ENCODE measurements at regions of chr6 and their contacts with region 1.

Region 1: GRCh38 chr6:163413345-163414116 is 987 bp upstream of the QKI start:
- DNase-seq: peak; percentile 93
- H3K4me3 ChIP-seq: peak overlapping the region; percentile 64 to 92 (median 70)
- H3K27ac ChIP-seq: peak overlapping the region; percentile 85
- H3K4me1 ChIP-seq: peaks cover 20% of the 10 kb centered on the region
- H3K27me3 ChIP-seq: no peaks in the 10 kb centered on the region
- CTCF ChIP-seq: no peak
- POLR2A ChIP-seq: peak; percentile 1

Region 2: DNA sequence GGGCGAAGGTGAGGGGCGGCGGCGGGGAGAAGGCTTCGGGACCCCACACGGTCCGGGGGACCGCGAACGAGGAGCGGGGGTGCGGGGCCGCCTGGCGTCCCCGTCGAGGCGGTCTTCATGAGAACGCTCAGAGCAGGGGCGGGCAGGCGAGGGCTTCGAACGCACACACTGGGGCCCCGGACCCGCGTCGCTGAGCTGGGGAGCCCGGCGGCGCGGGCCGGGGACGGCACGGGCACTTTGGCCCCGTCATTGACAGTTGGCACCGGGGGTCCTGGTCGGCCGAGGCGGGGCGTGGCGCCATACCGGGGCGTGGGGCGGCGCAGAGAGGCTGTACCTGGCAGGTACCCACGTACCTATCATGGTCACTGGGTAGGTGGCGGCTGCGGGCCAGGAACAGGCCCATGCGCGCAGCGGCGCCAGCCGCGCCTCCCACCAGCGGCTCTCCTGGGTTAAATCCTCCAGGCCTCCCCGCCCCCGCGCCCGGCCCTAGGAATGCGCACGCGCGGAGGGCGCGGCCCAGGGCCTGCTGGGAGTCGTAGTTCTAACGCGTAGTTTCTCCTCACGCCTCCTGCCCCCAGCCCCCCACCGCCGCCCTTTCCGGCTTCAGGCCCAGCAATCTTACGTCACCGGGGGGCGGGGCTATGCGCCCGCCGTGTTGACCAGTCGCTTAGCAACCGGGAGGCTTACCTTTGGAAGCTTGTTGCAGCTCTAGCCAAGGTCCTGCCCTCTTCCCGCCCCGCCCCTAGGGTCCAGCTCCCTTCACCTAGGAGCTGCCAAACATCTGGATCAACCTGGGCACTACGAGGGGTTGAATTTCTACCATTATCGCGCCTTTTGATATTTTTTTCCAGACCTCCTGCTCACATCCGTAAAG is 686.0 kb before region 1 on chr6 and contains the starts of genes PACRG and PRKN:
- CTCF ChIA-PET with region 1: no interaction called
- POLR2A ChIA-PET with region 1: no interaction called
- dilution Hi-C with region 1: no loop called
- intact Hi-C with region 1: loop called (anchors 10 kb)
- DNase-seq: peak; percentile 96
- H3K4me3 ChIP-seq: peak within 1 kb of the TSS; percentile 57 to 97 (median 60)
- H3K27ac ChIP-seq: peak within 1 kb of the TSS; percentile 31
- H3K4me1 ChIP-seq: peaks cover 5% of the 10 kb centered on the region
- H3K27me3 ChIP-seq: no peaks in the 10 kb centered on the region
- CTCF ChIP-seq: no peak
- POLR2A ChIP-seq: peak; percentile 30
- total RNA-seq, gene PACRG: not detected in 2 replicates
- total RNA-seq, gene PRKN: 0.60 TPM in 1 of 2 replicates, not detected in the other

Region 3: DNA sequence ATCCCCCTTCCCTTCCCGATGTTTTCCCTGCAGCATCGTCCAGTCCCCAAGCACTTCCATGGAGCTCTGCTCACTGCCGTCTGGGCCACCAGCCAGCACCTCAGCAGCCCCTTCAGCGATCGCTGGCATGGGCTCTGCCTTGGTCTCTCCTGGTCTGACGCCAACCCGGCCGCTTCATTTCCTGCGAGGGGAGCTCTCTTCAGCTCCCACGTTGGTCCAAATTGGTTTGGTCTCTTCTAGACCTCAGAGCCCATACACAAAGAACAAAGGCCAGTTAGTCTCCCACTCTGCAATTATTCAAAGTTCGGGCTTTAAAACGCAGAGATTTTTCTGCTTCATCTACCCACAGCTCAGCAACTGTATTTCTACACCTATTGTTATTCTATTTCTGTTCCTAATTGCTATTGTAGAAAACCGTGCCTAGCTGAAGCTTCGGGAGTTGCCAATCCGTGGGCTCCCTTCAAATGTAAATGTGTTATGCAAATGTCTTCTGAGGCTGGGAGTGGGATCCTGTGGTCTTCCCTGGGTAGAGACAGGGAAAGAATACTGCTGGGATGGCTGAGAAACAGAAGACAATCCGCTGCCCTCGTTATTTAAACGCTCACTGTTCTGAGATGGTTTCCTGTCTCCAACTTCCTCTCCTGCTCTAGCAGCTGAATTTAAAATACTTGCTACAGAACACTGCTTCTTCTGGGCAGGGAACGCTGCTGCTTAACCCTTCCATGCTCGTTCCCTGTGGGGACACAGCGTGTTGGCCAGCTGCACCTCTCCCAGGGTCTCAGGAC is 153.2 kb before region 1 on chr6:
- CTCF ChIA-PET with region 1: interaction called, 3 read pairs
- POLR2A ChIA-PET with region 1: no interaction called
- dilution Hi-C with region 1: no loop called
- intact Hi-C with region 1: loop called (anchors 1 kb)
- DNase-seq: peak; percentile 48
- H3K4me3 ChIP-seq: peak overlapping the region in 2 of 3 experiments; percentile 21 to 38
- H3K27ac ChIP-seq: no peak overlapping the region
- H3K4me1 ChIP-seq: peaks cover 9% of the 10 kb centered on the region
- H3K27me3 ChIP-seq: no peaks in the 10 kb centered on the region
- CTCF ChIP-seq: no peak
- POLR2A ChIP-seq: no peak

Region 4: DNA sequence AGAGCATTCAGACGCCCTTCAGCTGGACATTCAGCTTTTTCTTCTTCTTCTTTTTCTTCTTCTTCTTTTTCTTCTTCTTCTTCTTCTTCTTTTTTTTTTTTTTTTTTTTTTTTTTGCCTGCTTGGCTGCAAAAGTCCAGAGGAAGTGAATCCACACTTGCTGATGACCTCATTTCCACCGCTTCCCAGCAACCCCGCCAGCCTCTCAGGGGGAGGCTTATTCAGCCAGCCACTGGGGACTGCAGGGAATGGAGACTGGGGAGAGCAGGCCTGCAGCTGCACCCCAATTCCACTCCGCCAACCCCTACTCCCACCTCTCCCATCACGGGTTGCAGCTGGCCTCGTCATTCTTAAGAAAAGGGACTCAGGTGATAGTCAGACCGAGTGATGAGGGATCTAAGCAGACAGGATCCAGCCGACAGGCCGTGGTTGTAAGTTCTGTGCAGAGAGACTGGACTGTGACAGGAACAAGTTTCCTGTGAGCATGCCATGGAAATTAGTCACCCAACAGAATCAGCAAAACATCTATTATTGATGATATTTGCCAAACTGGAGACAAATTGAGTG is 58.0 kb before region 1 on chr6:
- CTCF ChIA-PET with region 1: interaction called, 31 read pairs
- POLR2A ChIA-PET with region 1: interaction called, 4 read pairs
- dilution Hi-C with region 1: no loop called
- intact Hi-C with region 1: loop called (anchors 1 kb)
- DNase-seq: peak; percentile 93
- H3K4me3 ChIP-seq: peak overlapping the region in 2 of 3 experiments; percentile 23 to 51
- H3K27ac ChIP-seq: peak overlapping the region; percentile 97
- H3K4me1 ChIP-seq: peaks cover 36% of the 10 kb centered on the region
- H3K27me3 ChIP-seq: no peaks in the 10 kb centered on the region
- CTCF ChIP-seq: no peak
- POLR2A ChIP-seq: peak; percentile 72

Region 5: GRCh38 chr6:163460307-163460782 is 46.8 kb after region 1 on chr6:
- CTCF ChIA-PET with region 1: interaction called, 7 read pairs
- POLR2A ChIA-PET with region 1: no interaction called
- dilution Hi-C with region 1: no loop called
- intact Hi-C with region 1: loop called (anchors 2 kb)
- DNase-seq: peak; percentile 84
- H3K4me3 ChIP-seq: peak overlapping the region; percentile 21 to 77 (median 38)
- H3K27ac ChIP-seq: peak overlapping the region; percentile 49
- H3K4me1 ChIP-seq: peaks cover 43% of the 10 kb centered on the region
- H3K27me3 ChIP-seq: no peaks in the 10 kb centered on the region
- CTCF ChIP-seq: no peak
- POLR2A ChIP-seq: no peak

Region 6: DNA sequence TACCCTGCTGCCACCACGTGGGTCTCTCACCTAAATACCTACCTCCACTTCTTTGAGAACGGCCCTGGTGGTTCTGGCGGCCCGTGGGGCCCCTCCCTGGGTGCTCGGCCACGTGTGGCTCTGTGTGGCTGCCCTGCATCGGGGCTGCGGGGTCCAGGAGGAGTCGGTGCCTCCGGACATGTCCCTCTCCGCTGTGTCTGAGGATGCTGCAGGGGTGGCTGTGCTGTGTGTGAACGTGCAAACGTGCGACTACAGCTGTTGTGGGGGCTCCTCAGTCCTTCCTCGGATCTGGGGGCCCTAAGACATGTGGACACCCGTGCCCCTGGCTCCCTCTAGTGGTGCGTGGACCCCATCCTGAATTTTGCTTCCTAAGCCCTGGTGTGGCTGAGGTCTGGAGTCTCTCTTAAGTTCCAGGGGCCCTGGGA is 692.8 kb after region 1 on chr6:
- CTCF ChIA-PET with region 1: interaction called, 4 read pairs
- POLR2A ChIA-PET with region 1: no interaction called
- dilution Hi-C with region 1: no loop called
- intact Hi-C with region 1: loop called (anchors 1 kb)
- DNase-seq: peak; percentile 31
- H3K4me3 ChIP-seq: no peak overlapping the region
- H3K27ac ChIP-seq: no peak overlapping the region
- H3K4me1 ChIP-seq: peaks cover 9% of the 10 kb centered on the region
- H3K27me3 ChIP-seq: no peaks in the 10 kb centered on the region
- CTCF ChIP-seq: peak; percentile 48 to 66
- POLR2A ChIP-seq: no peak

Region 7: GRCh38 chr6:165049364-165049763 is 1635.8 kb after region 1 on chr6:
- CTCF ChIA-PET with region 1: no interaction called
- POLR2A ChIA-PET with region 1: no interaction called
- dilution Hi-C with region 1: no loop called
- intact Hi-C with region 1: loop called (anchors 5 kb)
- DNase-seq: no peak
- H3K4me3 ChIP-seq: no peak overlapping the region
- H3K27ac ChIP-seq: no peak overlapping the region
- H3K4me1 ChIP-seq: no peaks in the 10 kb centered on the region
- H3K27me3 ChIP-seq: no peaks in the 10 kb centered on the region
- CTCF ChIP-seq: peak; percentile 10 to 23
- POLR2A ChIP-seq: no peak

Measured in endothelial cell of umbilical vein (primary cell).